ENCODE measurements at regions of chr1 and their contacts with region 1.

Region 1: GRCh38 chr1:244850099-244850852 is 14.1 kb downstream of the HNRNPU start:
- DNase-seq: no peak
- ATAC-seq: no peak
- H3K4me3 ChIP-seq: no peak overlapping the region
- H3K27ac ChIP-seq: no peak overlapping the region
- H3K4me1 ChIP-seq: no peaks in the 10 kb centered on the region
- H3K27me3 ChIP-seq: no peaks in the 10 kb centered on the region
- CTCF ChIP-seq: no peak

Region 2: GRCh38 chr1:244494659-244495058 is 355.6 kb before region 1 on chr1:
- CTCF ChIA-PET with region 1: no interaction called
- POLR2A ChIA-PET with region 1: no interaction called
- in situ Hi-C with region 1: no loop called
- intact Hi-C with region 1: no loop called
- DNase-seq: no peak
- ATAC-seq: no peak
- H3K4me3 ChIP-seq: no peak overlapping the region
- H3K27ac ChIP-seq: no peak overlapping the region
- H3K4me1 ChIP-seq: no peaks in the 10 kb centered on the region
- H3K27me3 ChIP-seq: no peaks in the 10 kb centered on the region; the same call in 1 of the 2 replicates
- CTCF ChIP-seq: no peak

Region 3: DNA sequence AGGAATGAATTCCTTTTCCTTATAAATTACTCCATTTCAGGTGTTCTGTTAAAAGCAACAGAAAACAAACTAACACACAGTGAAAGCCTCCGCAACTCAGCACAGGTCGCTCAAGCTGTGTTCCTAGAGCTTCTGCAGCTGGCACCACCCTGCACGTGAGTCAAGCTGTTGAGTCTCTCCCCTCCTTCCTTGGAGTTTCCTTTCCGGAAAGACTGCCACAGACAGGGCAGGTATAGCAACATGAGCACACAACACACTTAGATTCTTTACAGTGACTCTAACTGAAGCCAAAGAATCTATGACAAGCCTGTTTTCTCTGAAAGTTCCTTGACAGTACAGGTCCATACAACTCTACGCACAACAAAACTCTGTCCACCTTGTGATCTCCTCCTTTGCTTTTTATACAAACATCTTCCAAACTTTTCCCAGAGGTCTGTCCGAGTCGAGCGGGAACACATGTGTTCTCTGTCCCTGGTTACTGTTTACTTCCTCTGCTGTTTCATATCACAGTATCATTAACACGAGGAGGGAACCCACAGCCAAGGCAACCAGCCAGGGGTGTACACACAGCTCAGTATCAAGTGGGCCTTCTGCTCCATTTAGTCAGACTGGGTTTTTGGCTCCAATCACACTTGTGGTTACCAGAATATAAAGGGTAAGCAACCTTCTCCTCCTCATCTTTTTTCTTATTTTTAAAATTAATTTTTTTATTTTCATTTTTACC is 236.0 kb before region 1 on chr1:
- CTCF ChIA-PET with region 1: no interaction called
- POLR2A ChIA-PET with region 1: no interaction called
- in situ Hi-C with region 1: no loop called
- intact Hi-C with region 1: no loop called
- DNase-seq: no peak
- ATAC-seq: 0 out of 2 replicates have a peak, but pooled peaks have one; percentile 53
- H3K4me3 ChIP-seq: no peak overlapping the region
- H3K27ac ChIP-seq: no peak overlapping the region
- H3K4me1 ChIP-seq: no peaks in the 10 kb centered on the region
- H3K27me3 ChIP-seq: 0 out of 2 replicates have a peak, but pooled peaks cover 3% of the 10 kb centered on the region
- CTCF ChIP-seq: no peak

Region 4: DNA sequence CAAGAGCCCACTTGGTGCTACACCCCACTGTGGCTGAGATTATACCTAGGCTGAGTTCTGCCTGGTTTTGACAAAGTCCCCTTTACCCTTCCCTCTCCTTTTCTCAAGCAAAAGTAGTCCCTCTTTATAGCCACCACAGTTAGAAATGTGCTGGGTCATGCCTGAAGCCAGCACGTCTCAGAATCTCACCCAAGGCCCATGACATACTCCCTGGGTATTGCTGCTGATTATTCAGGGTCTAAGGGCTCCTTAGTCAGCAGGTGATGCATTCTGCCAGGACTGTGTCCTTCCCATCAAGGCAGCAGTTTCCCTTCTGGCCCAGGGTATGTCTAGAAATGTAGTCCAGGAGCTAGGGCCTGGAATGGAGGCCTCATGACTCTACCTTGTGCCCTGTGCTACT is 82.1 kb before region 1 on chr1:
- CTCF ChIA-PET with region 1: no interaction called
- POLR2A ChIA-PET with region 1: interaction called, 10 read pairs
- in situ Hi-C with region 1: no loop called
- intact Hi-C with region 1: no loop called
- DNase-seq: no peak
- ATAC-seq: 0 out of 2 replicates have a peak, but pooled peaks have one; percentile 21
- H3K4me3 ChIP-seq: no peak overlapping the region
- H3K27ac ChIP-seq: no peak overlapping the region
- H3K4me1 ChIP-seq: no peaks in the 10 kb centered on the region
- H3K27me3 ChIP-seq: no peaks in the 10 kb centered on the region
- CTCF ChIP-seq: no peak

Region 5: GRCh38 chr1:244952940-244953339 is 102.7 kb after region 1 on chr1:
- CTCF ChIA-PET with region 1: no interaction called
- POLR2A ChIA-PET with region 1: no interaction called
- in situ Hi-C with region 1: no loop called
- intact Hi-C with region 1: no loop called
- DNase-seq: no peak
- ATAC-seq: no peak
- H3K4me3 ChIP-seq: no peak overlapping the region
- H3K27ac ChIP-seq: no peak overlapping the region
- H3K4me1 ChIP-seq: no peaks in the 10 kb centered on the region
- H3K27me3 ChIP-seq: no peaks in the 10 kb centered on the region
- CTCF ChIP-seq: no peak